ENCODE measurements at regions of chr20 and their contacts with region 1.

Region 1: DNA sequence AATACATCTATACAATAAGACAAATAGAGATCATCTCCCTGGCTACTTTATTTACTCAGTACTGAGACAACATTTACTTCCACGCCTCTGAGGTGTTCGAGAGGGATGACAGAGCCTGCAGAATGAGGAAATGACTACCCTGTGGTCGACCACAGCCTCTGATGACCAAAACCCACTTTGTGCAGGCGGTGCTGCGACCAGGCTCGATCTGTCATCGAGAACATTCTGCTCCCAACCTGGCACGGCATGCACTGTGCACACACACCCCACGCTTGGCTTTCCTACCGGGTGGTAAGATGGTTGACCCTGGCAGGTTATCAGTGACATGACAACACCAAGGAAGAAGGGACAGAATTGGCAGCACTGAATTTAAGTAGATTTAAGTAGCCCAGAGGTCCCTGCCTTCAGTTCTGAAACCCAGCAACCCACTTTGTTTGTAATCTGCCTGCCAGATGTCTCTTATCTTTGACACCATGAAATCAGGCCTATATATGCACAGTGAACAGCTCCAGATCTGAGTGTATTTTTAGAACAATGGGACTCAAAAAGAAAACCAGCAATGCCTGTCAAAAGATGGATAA is 42.6 kb downstream of the TTI1 start:
- DNase-seq: peak; percentile 25 to 70 (median 45)
- H3K4me3 ChIP-seq: no peak overlapping the region
- H3K4me3 Mint-ChIP-seq: peak overlapping the region in 4 of 8 donors; percentile 6 to 28 (median 14)
- H3K27ac ChIP-seq: no peak overlapping the region
- H3K27ac Mint-ChIP-seq: peak overlapping the region; percentile 72 to 88 (median 84)
- H3K4me1 ChIP-seq: peaks cover 11% of the 10 kb centered on the region
- H3K4me1 Mint-ChIP-seq: peaks cover 16 to 26% (median 21%) of the 10 kb centered on the region in 4 donors
- H3K27me3 ChIP-seq: no peaks in the 10 kb centered on the region
- H3K27me3 Mint-ChIP-seq: no peaks in the 10 kb centered on the region

Region 2: DNA sequence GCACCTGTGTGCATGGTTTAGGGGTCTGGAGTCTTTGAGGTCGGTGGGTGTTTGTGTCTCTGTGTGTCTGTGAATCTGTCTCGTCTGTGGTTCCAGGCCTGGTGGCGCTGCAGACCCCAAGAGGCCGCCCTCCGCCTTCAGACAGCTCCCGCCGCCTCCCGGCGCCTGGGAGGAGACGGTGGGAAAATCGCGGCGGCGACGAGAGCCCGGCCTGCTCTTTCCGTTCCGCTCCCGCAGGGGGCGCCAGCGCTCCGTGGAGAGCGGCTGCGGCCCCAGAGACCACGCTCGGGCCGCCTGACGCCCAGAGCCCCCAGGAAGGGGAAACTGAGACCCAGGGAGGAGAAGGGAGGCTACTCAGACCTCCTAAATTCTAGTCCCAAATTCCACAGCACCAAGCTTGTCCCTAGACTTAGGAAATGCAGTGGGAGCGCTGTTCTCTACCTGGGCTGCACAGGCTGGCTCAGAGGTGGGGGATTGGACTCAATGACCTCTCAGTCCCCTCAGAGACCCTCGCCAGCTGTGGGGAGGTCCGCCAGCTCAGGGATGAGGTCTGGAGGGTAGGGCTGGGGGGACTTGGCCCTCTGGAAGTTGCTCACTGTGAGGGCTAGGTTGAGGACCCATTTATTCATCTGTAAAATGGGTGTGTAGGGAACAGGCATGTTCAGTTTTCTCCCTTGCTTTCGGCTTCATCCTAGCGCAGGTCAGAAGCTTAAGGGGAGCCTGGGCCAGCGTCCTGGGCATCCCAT is 426.1 kb before region 1 on chr20:
- CTCF ChIA-PET with region 1: interaction called, 6 read pairs
- POLR2A ChIA-PET with region 1: no interaction called
- intact Hi-C with region 1: loop called (anchors 5 kb)
- DNase-seq: peak in 4 of 5 donors; percentile 9 to 34 (median 14)
- H3K4me3 ChIP-seq: no peak overlapping the region
- H3K4me3 Mint-ChIP-seq: peak overlapping the region in 1 of 8 donors; percentile 13
- H3K27ac ChIP-seq: no peak overlapping the region
- H3K27ac Mint-ChIP-seq: no peak overlapping the region
- H3K4me1 ChIP-seq: no peaks in the 10 kb centered on the region
- H3K4me1 Mint-ChIP-seq: no peaks in the 10 kb centered on the region
- H3K27me3 ChIP-seq: peaks cover 16% of the 10 kb centered on the region
- H3K27me3 Mint-ChIP-seq: peaks cover 29 to 38% of the 10 kb centered on the region in 2 donors

Region 3: DNA sequence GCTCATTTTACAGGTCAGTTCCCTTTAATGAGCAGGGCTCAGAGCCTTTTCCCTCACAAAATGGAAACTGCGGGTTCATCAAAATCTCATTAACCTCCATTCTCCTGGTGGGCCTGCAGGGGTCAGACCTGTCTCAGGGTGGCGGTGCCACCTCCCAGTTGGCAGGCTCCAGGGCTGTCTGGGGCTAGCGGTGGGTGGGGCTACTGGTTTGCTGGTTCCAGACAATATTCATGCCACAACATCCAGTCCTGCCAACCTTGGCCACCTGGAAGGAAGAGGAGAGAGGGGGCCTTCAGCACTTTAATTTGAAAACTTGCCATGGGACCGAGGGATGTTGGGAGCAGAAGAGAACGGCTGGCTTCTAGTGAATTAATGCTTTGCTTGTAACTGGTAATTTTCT is 338.7 kb before region 1 on chr20:
- CTCF ChIA-PET with region 1: no interaction called
- POLR2A ChIA-PET with region 1: no interaction called
- intact Hi-C with region 1: loop called (anchors 5 kb)
- DNase-seq: peak in 1 of 5 donors; percentile 2
- H3K4me3 ChIP-seq: no peak overlapping the region
- H3K4me3 Mint-ChIP-seq: no peak overlapping the region
- H3K27ac ChIP-seq: no peak overlapping the region
- H3K27ac Mint-ChIP-seq: no peak overlapping the region
- H3K4me1 ChIP-seq: no peaks in the 10 kb centered on the region
- H3K4me1 Mint-ChIP-seq: no peaks in the 10 kb centered on the region
- H3K27me3 ChIP-seq: no peaks in the 10 kb centered on the region
- H3K27me3 Mint-ChIP-seq: peaks cover 12 to 26% of the 10 kb centered on the region in 2 donors

Region 4: GRCh38 chr20:38017959-38018358 is 27.3 kb after region 1 on chr20:
- CTCF ChIA-PET with region 1: no interaction called
- POLR2A ChIA-PET with region 1: no interaction called
- intact Hi-C with region 1: no loop called
- DNase-seq: no peak
- H3K4me3 ChIP-seq: no peak overlapping the region
- H3K4me3 Mint-ChIP-seq: no peak overlapping the region
- H3K27ac ChIP-seq: no peak overlapping the region
- H3K27ac Mint-ChIP-seq: no peak overlapping the region
- H3K4me1 ChIP-seq: no peaks in the 10 kb centered on the region
- H3K4me1 Mint-ChIP-seq: peaks cover 18 to 27% (median 26%) of the 10 kb centered on the region in 4 donors
- H3K27me3 ChIP-seq: no peaks in the 10 kb centered on the region
- H3K27me3 Mint-ChIP-seq: no peaks in the 10 kb centered on the region

Measured in CD4-positive, alpha-beta memory T cell (primary cell).